Activated B cell treated with CpG ODN at 0.5 μM for 24 hours (primary cell): ENCODE measurements at regions of chr6 and their contacts with region 1.

Region 1: DNA sequence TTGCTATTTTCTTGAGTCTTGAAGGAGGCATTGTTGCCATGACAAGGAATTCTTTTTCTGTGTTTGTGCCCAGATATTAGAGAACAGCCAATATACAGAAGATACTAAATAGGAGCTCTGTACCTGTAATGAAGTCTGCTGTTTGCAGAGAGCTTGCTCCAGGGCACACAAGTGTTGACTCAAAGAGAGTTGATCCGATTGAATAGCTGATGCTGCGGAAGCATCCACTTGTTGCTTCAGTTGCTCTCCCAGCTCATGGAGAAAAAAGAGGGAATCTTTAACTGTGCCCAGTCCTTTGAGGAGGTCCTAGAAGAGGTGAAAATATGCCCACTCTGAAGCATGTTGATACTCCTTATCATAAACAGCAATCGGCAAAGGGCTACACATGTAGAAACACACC is 411.4 kb downstream of the ESR1 start:
- DNase-seq: no peak
- ATAC-seq: no peak
- H3K4me3 Mint-ChIP-seq: no peak overlapping the region
- H3K27ac Mint-ChIP-seq: no peak overlapping the region
- H3K4me1 Mint-ChIP-seq: no peaks in the 10 kb centered on the region
- H3K27me3 Mint-ChIP-seq: no peaks in the 10 kb centered on the region
- CTCF ChIP-seq: no peak

Region 2: DNA sequence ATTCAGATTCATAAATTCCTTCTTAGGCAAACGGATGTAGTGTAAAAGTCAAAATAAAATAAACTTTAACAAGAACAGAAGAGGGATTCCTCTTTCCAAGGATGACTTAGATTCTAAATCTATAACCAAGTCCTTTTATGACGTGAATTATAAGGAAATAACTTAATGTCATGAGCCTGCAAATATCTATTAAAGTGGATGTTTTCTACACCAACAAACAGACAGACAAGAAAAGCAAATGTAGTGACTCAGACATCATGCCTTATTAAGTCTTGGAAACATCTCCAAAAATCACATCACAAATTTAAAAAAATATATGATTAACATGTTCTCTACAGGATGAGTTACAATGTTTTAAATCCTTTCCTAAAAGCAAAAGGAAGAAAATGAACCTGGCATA is 14.3 kb before region 1 on chr6:
- CTCF ChIA-PET with region 1: no interaction called
- POLR2A ChIA-PET with region 1: no interaction called
- intact Hi-C with region 1: loop called (anchors 2 kb)
- DNase-seq: no peak
- ATAC-seq: no peak
- H3K4me3 Mint-ChIP-seq: no peak overlapping the region
- H3K27ac Mint-ChIP-seq: no peak overlapping the region
- H3K4me1 Mint-ChIP-seq: no peaks in the 10 kb centered on the region
- H3K27me3 Mint-ChIP-seq: no peaks in the 10 kb centered on the region
- CTCF ChIP-seq: no peak